PC-9 (cell line): ENCODE measurements at regions of chr16 and their contacts with region 1.

Region 1: DNA sequence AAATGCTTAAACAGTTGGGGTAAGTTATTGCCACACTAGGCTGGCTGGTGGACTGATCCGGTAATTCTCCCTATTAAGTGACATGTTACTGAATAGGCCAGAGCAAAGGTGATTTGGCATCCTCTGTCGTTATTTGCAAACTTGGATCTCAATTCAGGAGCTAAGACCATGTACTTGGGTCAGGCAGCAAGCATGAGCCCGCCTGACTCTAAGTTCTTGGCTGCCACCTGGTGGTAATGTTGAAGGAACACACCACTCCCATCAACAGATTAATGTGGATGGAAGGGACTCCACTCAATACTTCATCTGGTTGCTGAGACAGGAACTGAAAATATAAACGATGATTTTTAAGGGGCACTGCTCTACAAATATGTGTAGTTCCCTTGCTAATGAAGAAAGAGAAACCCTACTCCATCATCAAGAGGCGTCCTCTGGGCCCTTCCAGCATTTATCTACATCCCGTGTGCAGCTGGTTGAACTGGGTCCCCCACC is 70.8 kb downstream of the EMP2 start:
- DNase-seq: peak; percentile 46 to 61
- H3K4me3 ChIP-seq: no peak overlapping the region
- H3K27ac ChIP-seq: no peak overlapping the region
- H3K4me1 ChIP-seq: peaks cover 4% of the 10 kb centered on the region; the same call in 1 of the 2 replicates
- H3K27me3 ChIP-seq: no peaks in the 10 kb centered on the region
- CTCF ChIP-seq: peak; percentile 88

Region 2: DNA sequence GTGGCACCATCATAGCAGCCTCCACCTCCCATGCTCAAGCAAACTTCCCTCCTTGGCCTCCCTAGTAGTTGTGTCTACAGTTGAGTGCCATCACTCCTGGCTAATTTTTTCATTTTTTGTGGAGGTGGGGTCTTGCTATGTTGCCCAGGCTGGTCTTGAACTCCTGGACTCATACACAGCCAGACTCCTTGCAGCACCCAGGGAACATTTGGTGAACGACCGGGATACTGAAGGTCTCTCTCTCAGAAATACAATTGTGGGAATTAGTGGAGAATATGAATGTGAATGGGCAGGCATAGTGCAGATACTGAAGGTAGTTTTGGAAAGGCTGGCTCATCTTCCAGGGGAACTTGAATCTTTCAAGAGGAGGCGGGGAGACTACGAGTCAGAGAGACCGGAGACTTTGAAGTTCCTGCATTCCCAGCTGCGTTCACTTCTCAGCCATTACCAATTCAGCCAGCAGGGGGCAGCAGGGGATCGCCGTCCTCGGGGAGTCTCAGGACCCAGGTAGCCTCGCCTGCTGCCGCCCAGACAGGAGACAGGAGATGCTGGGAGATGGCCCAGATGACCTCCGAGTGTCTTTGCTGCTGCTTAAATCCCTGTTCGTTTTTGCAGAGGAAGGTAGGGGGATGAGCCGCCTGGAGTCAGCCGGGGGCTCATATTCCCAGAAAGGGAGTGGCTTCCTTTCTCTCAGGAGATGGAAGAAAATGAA is 1349.6 kb before region 1 on chr16:
- CTCF ChIA-PET with region 1: no interaction called
- POLR2A ChIA-PET with region 1: no interaction called
- intact Hi-C with region 1: loop called (anchors 1 kb)
- DNase-seq: peak; percentile 45 to 86
- H3K4me3 ChIP-seq: no peak overlapping the region
- H3K27ac ChIP-seq: no peak overlapping the region
- H3K4me1 ChIP-seq: no peaks in the 10 kb centered on the region
- H3K27me3 ChIP-seq: peaks cover 6% of the 10 kb centered on the region; the same call in 1 of the 2 replicates
- CTCF ChIP-seq: peak; percentile 96

Region 3: GRCh38 chr16:9647981-9648712 is 861.4 kb before region 1 on chr16:
- CTCF ChIA-PET with region 1: no interaction called
- POLR2A ChIA-PET with region 1: no interaction called
- intact Hi-C with region 1: loop called (anchors 2 kb)
- DNase-seq: no peak
- H3K4me3 ChIP-seq: no peak overlapping the region
- H3K27ac ChIP-seq: no peak overlapping the region
- H3K4me1 ChIP-seq: no peaks in the 10 kb centered on the region
- H3K27me3 ChIP-seq: no peaks in the 10 kb centered on the region; the same call in 1 of the 2 replicates
- CTCF ChIP-seq: peak; percentile 76

Region 4: DNA sequence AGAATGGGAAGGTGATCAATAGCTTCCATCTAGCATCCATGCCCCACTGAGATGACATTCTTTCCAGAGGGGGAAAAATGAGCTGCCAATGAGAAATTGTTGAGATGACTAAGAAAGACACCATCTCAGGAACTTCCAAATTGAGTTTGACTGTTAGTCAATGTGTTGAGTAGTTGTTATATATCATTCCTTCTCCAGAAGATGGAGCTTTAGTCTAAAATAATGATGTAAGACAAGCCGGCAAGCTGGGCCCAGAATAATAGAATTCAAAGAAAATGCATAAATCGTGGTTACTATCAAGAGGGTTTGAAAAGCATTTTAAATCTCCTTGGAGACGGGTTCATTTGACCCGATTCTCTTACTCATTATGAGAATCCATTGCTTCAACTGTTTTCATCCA is 194.8 kb before region 1 on chr16:
- CTCF ChIA-PET with region 1: no interaction called
- POLR2A ChIA-PET with region 1: no interaction called
- intact Hi-C with region 1: loop called (anchors 5 kb)
- DNase-seq: no peak
- H3K4me3 ChIP-seq: no peak overlapping the region
- H3K27ac ChIP-seq: no peak overlapping the region
- H3K4me1 ChIP-seq: no peaks in the 10 kb centered on the region
- H3K27me3 ChIP-seq: no peaks in the 10 kb centered on the region
- CTCF ChIP-seq: no peak; the same call in 1 of the 2 replicates

Region 5: DNA sequence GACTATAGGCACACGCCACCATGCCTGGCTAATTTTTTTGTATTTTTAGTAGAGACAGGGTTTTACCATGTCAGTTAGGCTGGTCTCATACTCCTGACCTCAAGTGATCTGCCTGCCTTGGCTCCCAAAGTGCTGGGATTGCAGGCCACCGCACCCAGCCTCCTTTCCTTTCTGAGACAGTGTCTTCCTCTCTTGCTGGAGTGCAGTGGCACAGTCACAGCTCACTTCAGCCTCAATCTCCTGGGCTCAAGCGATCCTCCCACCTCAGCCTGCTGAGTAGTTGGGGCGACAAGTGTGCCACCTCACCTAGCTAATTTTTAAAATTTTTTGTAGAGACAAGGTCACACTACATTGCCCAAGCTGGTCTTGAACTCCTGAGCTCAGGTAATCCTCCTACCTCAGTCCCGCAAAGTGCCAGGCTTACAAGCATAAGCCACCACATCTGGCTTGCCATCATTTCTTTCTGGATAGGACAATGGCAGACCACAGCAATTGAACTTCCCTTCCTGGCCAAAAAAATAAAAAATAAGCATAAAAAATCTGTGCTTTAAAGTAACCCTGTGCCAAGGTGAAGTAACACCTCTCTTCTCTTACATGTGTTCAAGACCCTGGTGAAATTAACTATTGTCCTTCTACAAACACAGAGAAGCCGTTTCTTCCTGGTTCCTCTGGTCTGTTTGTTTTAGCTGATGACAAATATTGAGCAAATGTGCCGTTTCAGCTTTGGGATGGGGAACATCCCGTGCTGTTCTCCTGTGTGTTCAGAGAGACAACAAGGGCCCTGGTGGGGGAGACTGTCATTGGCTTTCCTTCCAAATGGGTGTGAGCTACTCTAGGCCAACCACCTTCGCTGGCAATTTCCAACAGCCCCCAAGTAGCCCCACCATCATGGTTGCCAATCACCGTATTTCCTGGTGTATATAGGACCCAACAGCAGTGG is 10.6 kb after region 1 on chr16:
- CTCF ChIA-PET with region 1: no interaction called
- POLR2A ChIA-PET with region 1: no interaction called
- intact Hi-C with region 1: no loop called
- DNase-seq: peak in 1 of 2 experiments; percentile 68
- H3K4me3 ChIP-seq: no peak overlapping the region
- H3K27ac ChIP-seq: peak overlapping the region; percentile 86
- H3K4me1 ChIP-seq: peaks cover 30% of the 10 kb centered on the region
- H3K27me3 ChIP-seq: no peaks in the 10 kb centered on the region
- CTCF ChIP-seq: no peak

Region 6: GRCh38 chr16:10558746-10559641 is 49.4 kb after region 1 on chr16:
- CTCF ChIA-PET with region 1: no interaction called
- POLR2A ChIA-PET with region 1: no interaction called
- intact Hi-C with region 1: no loop called
- DNase-seq: peak; percentile 86 to 95
- H3K4me3 ChIP-seq: peak overlapping the region; percentile 52
- H3K27ac ChIP-seq: peak overlapping the region; percentile 78
- H3K4me1 ChIP-seq: peaks cover 37% of the 10 kb centered on the region
- H3K27me3 ChIP-seq: no peaks in the 10 kb centered on the region
- CTCF ChIP-seq: no peak

Region 7: DNA sequence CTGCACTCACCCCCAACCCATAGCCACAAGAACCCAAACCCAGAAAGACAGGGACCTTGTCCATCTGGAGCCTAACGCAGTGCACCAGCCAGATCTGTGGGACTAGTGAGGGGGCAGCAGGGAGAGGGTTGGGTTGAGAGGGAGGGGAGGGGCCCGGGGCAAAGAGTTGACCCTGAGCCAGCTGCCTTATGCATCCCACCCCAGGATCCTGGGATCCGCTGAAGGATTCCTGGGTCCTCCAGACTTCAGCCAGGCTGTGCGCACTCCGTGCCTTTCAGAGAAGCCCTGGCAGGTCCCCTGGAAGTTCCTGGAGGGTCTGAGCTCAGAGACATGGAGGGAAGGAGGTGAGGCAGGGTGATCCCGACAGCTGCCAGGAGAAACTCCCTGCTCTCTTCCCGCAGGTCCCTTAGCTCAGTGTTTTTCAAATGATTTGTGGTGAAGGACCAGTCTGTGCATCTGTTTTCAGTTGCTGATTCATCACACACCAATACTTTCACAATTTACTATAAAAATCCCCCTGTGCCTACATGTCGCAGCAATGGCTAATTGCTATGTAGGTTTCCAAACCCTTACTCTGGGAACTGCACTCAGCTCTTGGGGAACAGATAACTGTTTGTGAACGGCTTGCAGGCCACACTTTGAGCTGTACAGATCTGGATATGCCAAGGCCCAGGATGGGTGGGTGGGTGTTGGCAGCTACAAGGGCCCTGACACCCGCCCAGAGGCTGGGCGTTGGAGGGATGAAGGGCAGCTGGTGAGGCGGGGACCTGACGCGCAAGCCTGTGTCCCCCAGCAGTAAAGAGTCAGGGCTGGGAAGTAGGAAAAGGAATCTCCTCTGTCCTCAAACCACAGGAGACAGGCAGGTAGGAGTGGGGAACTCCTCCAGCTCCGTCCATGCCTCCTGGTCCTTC is 91.2 kb after region 1 on chr16:
- CTCF ChIA-PET with region 1: no interaction called
- POLR2A ChIA-PET with region 1: no interaction called
- intact Hi-C with region 1: no loop called
- DNase-seq: no peak
- H3K4me3 ChIP-seq: no peak overlapping the region
- H3K27ac ChIP-seq: no peak overlapping the region
- H3K4me1 ChIP-seq: peaks cover 6% of the 10 kb centered on the region
- H3K27me3 ChIP-seq: no peaks in the 10 kb centered on the region
- CTCF ChIP-seq: no peak

Region 8: DNA sequence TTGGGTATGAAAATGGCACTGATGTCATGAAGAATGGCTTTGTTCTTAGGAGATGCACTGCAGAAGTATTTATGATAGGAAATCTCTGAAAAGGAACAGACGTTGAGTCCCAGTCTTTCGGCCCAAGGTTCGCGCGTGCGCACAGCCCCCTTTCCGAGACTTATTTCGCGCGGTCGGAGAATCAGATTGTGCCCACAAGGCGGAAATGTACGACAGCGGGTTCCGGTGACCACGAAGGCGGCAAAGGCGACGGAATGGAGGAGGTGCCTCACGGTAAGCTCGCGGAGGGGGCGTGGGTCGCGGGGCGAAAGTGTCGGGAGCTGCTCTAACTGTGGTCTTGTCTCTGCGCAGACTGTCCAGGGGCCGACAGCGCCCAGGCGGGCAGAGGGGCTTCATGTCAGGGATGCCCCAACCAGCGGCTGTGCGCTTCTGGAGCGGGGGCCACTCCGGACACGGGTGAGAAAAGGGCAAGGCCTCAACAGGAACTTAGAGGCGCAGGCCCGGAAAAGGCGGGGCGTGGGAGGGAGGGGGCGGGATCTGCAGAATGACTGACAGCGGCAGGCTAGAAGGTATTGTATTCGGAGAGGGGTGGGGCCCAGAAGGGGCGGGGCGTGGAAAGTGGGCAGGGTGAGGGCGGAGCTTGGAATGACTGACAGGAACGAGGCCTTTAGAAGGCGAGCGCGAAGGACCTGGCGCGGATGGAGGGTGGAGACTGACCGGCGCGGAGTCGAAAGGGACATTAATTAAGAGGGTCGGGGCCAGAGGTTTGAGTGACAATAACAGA is 234.2 kb after region 1 on chr16 and contains the start of gene NUBP1:
- CTCF ChIA-PET with region 1: interaction called, 7 read pairs
- POLR2A ChIA-PET with region 1: interaction called, 20 read pairs
- intact Hi-C with region 1: no loop called
- DNase-seq: peak; percentile 93 to 99
- H3K4me3 ChIP-seq: peak within 1 kb of the TSS; percentile 69
- H3K27ac ChIP-seq: peak within 1 kb of the TSS; percentile 88
- H3K4me1 ChIP-seq: peaks cover 14% of the 10 kb centered on the region
- H3K27me3 ChIP-seq: no peaks in the 10 kb centered on the region
- CTCF ChIP-seq: no peak
- total RNA-seq, gene NUBP1: 21.0 and 28.9 TPM in 2 replicates